GM13976 (cell line): ENCODE measurements at regions of chr9 and their contacts with region 1.

Region 1: DNA sequence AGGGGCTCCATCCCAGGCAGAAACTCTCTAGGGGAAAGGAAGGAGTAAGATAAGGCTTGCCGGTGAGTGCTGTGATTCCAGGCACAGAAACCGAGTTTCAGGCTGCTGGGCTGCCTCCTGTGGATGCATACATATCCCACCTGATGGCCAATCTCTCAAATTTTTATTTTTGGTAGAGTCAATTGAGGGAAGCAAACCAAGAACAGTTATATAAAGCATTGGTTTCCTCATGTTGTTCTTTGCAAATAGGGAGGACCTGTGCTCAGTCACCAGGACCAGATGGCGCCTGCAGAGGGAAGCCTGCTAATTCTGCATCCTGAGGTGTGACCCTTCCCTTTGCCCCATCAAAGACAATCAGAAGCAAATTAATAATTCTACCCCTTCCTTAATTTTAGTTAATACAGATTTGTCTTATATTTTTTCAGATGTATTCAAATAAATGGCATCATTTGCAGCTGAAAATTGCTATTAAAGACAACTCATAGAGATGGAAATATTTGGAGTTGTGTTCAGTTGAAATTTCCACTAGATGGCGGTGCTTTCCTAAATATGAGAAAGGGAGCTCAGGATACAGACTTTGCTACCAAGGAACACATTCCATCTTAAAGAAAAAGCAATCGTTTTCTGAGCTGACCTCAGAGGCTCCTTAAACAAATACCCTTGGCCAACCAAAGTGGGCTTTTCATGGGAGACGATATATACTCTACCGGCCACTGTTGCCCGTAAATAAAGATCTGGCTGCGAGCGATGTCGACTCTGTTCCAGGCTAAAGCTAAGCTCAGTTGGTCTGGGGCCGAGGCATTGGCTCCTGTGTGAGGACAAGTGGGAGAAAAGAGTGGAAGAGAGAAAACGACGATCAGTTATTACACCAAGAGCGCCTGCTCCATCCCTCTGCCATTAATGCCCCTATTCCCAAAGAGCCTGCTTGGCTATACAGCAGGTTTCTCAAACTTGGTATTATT is 225.7 kb upstream of the KLF9 start:
- DNase-seq: no peak
- CTCF ChIP-seq: peak; percentile 24

Region 2: DNA sequence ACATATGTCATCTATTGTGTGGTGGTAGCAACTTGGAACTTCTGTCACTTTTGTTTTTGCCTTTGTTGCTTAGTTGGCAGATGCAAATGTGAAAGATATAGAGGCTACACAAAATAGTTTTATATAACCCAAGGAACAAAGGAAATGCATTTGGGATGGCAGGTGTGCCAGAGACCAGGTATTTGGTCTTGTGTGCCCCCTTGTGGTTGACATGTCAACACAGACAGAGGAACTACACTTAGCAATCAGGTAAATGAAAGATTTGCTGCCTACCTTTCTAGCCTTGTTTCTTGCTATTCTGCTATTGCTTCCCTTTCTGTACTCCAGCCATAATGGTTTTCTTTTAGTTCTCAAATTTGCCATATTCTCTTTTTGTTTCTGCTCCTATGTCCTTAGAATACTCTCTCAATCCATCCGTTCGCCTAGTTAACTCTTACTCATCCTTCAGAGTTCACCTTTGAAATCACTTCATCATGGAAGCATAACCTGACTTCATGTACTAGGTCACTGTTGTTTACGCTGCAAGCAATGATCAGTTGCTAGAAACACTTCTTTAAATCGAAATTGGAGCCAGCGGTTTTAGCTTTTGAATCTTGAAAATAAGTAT is 361.7 kb after region 1 on chr9:
- in situ Hi-C with region 1: loop called (anchors 25 kb)
- DNase-seq: peak; percentile 10
- CTCF ChIP-seq: peak; percentile 19

Region 3: GRCh38 chr9:71048280-71048679 is 408.1 kb after region 1 on chr9:
- in situ Hi-C with region 1: no loop called
- DNase-seq: no peak
- CTCF ChIP-seq: no peak

Region 4: DNA sequence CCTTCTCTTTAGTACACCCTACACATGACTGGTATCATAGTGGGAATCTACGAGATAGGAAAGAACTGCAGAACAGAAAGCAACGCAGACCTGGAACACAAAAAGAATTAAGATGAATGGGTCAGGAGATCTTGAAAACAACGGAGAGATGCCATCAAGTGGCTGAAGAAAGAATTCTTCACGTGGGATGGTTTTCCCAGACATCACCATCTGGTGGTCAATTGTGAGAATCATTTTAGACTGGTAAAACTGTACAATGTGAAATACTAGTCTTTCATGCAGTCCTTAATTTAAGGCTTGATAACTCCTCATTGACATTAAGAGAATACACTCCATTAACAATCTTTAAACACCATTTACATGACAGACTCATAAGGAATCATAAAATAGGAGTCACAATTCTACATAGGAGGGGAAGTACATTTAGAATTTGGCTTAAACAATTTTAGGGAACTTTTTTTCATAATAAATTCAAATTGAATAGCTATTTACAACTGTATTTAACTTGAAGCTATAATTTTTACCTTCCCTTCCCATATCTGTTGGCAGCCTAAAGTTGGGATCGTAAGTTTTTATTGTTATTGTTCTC is 609.7 kb after region 1 on chr9:
- in situ Hi-C with region 1: loop called (anchors 25 kb)
- DNase-seq: peak; percentile 27
- CTCF ChIP-seq: no peak

Region 5: GRCh38 chr9:71326360-71326759 is 686.2 kb after region 1 on chr9:
- in situ Hi-C with region 1: no loop called
- DNase-seq: no peak
- CTCF ChIP-seq: no peak